Testis (tissue), 5 donors: ENCODE measurements at regions of chr19 and their contacts with region 1.

Region 1: GRCh38 chr19:6516659-6517291 is 14.1 kb upstream of the TNFSF9 start:
- DNase-seq: peak; percentile 91
- H3K4me3 ChIP-seq: peak overlapping the region; percentile 53 to 60
- H3K27ac ChIP-seq: peak overlapping the region in 1 of 2 donors; percentile 73
- H3K4me1 ChIP-seq: no peaks in the 10 kb centered on the region
- H3K27me3 ChIP-seq: no peaks in the 10 kb centered on the region
- CTCF ChIP-seq: peak; percentile 78 to 89 (median 88)
- POLR2A ChIP-seq: no peak

Region 2: DNA sequence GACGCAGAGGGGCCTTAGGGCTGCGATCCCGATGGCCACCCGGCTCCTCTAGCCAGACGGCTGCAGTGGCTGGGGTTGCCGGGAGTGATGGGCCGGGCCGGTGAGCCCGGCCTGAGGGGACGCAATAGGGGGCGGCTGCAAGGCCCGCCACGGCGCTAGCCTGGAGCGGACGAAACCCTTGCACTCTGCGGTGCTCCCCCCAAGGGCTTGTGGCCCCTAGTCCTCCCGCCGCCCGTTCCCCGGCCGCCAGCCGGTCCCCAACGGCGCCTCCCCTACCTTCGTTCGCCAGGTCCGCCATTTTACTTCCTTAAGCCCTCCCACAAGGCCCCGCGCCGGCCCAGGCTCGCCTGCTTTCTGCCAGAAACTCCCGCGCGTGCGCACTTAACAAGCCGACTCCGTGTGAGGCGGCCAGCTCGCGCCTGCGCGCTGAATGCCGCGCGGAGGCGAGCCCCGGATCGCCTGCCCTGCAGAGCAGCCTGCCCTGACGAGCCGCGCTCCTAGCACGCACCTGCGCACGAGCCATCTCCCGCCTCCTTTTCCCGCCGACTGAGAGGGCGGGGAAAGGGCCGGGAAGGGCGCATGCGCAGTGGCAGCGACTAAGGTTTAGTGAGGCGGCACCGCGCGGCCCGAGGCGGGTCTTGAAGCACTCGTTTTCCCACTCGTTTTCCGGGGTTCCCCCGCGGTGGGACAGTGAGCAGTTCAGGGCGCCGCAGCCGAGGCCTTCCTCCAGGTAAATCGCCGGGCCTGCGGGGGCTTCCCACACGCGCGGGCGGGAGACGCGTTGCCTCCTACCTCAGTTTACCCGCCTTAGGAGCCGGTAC is 538.8 kb before region 1 on chr19 and contains the start of gene RANBP3:
- intact Hi-C with region 1: no loop called
- DNase-seq: peak; percentile 98
- H3K4me3 ChIP-seq: peak within 1 kb of the TSS; percentile 86 to 87
- H3K27ac ChIP-seq: peak within 1 kb of the TSS; percentile 82 to 93
- H3K4me1 ChIP-seq: peaks cover 19% of the 10 kb centered on the region
- H3K27me3 ChIP-seq: no peaks in the 10 kb centered on the region
- CTCF ChIP-seq: peak in 1 of 3 experiments; percentile 9
- POLR2A ChIP-seq: no peak
- total RNA-seq, gene RANBP3: 145 to 148 TPM

Region 3: DNA sequence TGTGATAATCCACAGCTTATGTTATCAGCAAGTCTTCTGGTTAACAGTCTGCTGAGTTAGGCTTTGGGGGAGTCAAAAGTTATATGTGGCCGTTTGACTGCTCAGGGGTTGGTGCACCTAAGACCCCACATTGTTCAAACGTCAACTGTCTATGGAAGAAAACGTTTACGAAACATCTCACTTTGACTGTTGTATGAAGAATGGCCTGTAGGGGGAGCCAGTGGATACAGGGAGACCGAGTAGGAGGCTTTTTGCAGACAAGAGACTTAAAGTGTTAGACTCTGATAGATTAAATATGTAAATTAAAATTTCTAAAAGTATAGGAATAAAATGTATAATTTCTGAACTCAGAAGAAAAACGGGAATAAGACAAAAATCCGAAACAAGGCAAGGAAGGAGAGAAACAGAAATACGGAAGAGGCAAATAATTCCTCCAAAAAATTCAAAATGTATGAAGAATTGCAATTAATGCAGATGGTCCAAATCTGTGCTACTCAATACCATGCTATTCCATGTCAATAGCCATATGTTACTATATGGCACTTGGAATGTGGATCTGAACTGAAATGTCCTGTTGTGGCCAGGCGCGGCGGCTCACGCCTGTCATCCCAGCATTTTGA is 115.3 kb after region 1 on chr19:
- intact Hi-C with region 1: loop called (anchors 5 kb)
- DNase-seq: peak; percentile 91
- H3K4me3 ChIP-seq: no peak overlapping the region
- H3K27ac ChIP-seq: no peak overlapping the region
- H3K4me1 ChIP-seq: no peaks in the 10 kb centered on the region
- H3K27me3 ChIP-seq: no peaks in the 10 kb centered on the region
- CTCF ChIP-seq: peak; percentile 76 to 89 (median 77)
- POLR2A ChIP-seq: no peak